ENCODE measurements at regions of chr7 and their contacts with region 1.

Region 1: DNA sequence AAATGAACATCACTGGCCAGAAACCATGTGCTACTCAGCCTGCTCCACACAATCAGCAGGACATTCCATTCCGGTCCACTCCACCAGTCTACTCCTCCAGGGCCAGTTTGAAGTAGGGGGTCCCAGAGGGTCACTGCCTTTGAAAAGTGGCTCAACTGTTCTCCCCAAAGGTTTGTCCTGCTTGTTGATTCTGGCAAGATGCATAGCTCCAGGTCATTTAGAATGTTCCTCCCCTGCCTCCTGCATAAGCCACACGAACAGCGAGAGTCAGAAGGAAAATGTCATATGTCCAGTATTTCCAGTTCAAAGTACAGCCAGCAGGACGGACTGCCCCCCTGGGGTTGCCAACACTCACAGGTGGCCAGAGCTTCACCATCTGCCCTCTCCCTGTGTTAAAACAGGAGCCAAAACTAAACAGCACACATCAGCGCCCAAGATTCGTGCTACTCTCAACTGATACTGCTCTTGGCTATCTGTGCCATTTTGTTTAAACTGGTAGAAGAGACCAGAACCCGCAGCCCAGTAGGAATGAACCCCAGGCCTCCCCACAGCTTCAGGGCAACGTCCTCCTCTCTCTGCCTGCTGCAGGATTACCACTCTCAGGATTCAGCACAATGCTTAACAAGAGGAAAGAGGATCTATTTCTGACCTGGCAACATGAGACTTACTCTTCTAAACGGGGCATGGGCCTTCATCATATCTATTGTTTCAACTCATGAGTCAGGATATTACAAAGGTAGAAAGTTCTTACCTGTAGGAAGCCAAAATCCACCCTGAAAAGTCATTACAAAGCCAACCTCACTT is 11.3 kb downstream of the GRB10 start:
- DNase-seq: no peak
- H3K4me3 ChIP-seq: no peak overlapping the region
- H3K27ac ChIP-seq: no peak overlapping the region
- H3K4me1 ChIP-seq: peaks cover 15 to 38% (median 36%) of the 10 kb centered on the region in 4 experiments
- H3K27me3 ChIP-seq: no peaks in the 10 kb centered on the region; a peak in 1 of 7 replicates
- CTCF ChIP-seq: no peak
- EP300 ChIP-seq: no peak
- POLR2A ChIP-seq: no peak
- RAD21 ChIP-seq: no peak

Region 2: GRCh38 chr7:50608196-50608906 is 163.1 kb before region 1 on chr7:
- CTCF ChIA-PET with region 1: no interaction called
- POLR2A ChIA-PET with region 1: no interaction called
- DNase-seq: no peak
- H3K4me3 ChIP-seq: no peak overlapping the region
- H3K27ac ChIP-seq: no peak overlapping the region
- H3K4me1 ChIP-seq: peaks cover 0 to 1% (median 0%) of the 10 kb centered on the region in 4 experiments; a peak in 1 of 7 replicates
- H3K27me3 ChIP-seq: no peaks in the 10 kb centered on the region
- CTCF ChIP-seq: no peak
- EP300 ChIP-seq: no peak
- POLR2A ChIP-seq: no peak
- RAD21 ChIP-seq: no peak

Region 3: GRCh38 chr7:50792342-50793114 is 21.1 kb after region 1 on chr7:
- CTCF ChIA-PET with region 1: interaction called, 3 read pairs
- POLR2A ChIA-PET with region 1: interaction called, 20 read pairs
- DNase-seq: no peak
- H3K4me3 ChIP-seq: peak overlapping the region; percentile 63 to 94 (median 70)
- H3K27ac ChIP-seq: no peak overlapping the region
- H3K4me1 ChIP-seq: peaks cover 4 to 18% (median 12%) of the 10 kb centered on the region in 4 experiments; a peak in 6 of 7 replicates
- H3K27me3 ChIP-seq: peaks cover 3 to 20% (median 19%) of the 10 kb centered on the region in 4 experiments
- CTCF ChIP-seq: no peak
- EP300 ChIP-seq: no peak
- POLR2A ChIP-seq: 0 out of 3 replicates have a peak, but pooled peaks of 1 of the 2 experiments have one; percentile 14
- RAD21 ChIP-seq: no peak

Measured in H1 (cell line).